GM18951 (cell line): ENCODE measurements at regions of chr2 and their contacts with region 1.

Region 1: GRCh38 chr2:68434981-68435380 is 32.1 kb downstream of the FBXO48 start:
- POLR2A ChIP-seq: no peak

Region 2: DNA sequence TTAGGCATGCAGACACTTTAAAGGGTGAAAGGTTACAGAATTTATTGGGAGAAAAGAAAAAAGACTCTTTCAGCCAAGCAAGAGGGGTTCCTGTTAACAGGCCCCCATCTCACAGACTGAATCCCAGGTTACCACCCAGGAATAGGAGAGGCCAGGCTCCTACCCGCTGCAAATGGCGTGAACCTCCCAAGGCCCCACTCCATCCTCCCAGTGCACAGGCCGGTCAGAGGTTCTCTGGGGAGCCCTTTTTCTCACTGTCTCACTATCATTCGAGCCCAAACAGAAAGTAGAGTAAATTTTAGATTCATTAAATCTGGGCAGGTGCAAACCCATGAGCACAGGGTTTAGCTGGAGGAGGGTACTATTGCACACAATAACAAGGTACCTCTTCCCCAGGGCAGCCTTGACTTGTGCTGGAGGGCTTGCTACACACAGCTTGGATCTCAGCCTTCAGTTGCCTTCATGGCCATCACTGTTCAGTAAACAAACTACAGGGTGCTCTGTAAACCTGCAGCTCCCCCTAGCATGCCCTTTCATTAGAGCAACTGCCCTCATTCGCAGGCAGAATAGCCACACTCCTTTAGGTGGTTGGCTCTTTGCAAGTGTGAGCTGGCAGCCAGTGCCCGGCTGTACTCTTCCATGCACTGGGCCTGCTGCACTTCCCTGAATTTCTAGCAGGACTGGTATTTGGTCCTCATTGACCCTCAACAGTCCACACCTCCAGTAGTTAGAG is 77.2 kb before region 1 on chr2:
- in situ Hi-C with region 1: loop called (anchors 5 kb)
- POLR2A ChIP-seq: no peak

Region 3: DNA sequence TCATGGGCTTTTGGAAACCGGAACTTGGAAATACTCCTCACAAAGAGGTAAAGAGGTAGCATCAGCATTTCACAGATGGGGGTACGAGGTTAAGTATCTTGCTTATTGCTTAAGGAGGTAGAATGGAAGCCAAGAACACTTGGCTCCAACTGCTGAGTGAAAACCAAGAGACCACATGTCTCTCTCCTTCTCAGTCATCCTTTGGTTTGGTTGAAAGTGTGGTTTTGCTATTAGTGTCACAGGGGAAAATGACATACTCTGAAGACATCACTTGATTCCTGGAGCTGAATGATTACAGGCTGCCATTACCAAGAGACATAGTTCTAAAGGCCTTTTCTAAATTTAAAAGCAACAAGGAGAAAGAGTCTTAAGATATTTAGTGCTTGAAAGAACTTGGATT is 619.5 kb after region 1 on chr2:
- in situ Hi-C with region 1: no loop called
- POLR2A ChIP-seq: no peak